Right ventricle myocardium superior (tissue), 1 donor: ENCODE measurements at regions of chr3 and their contacts with region 1.

Region 1: DNA sequence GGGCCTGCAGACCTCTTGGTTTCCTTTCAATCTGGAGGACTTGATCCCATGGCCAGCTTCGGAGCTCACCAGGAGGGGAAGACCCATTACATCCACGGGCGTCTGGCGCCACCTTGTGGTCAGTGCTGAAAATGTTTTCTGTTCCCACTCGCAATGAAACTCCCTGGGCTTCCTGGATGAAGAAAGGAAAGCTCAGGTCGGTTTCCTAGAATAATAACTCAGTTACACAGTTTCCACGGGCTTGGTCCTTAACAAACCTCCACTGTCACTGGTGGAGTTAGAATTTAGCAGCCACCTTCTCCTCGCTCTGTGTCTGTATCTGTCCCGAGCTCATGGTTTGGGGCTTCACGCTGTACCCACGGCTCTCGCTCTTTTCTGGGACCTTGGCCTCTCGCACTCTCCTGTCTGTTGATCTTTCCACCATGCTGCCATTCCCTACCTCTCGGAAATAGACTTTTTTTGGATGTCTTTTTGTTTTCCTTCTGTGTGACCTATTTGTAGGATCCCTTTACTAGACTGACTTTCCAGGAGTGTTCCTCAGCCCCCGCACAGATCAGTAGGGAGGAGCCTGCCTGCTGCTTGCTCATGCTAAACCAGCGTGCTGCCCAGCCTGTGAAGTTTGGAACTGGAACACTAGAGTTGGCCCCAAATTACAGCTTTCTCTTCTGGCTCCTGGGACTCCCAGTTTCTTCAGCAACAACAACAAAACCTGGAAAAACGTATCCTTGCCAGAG is 56.3 kb downstream of the IL20RB start:
- DNase-seq: peak; percentile 92
- ATAC-seq: peak; percentile 99

Region 2: GRCh38 chr3:136075218-136075808 is 938.8 kb before region 1 on chr3:
- intact Hi-C with region 1: loop called (anchors 5 kb)
- DNase-seq: peak; percentile 66
- ATAC-seq: peak; percentile 90

Region 3: GRCh38 chr3:136385457-136385856 is 628.7 kb before region 1 on chr3:
- intact Hi-C with region 1: loop called (anchors 10 kb)
- DNase-seq: no peak
- ATAC-seq: no peak

Region 4: GRCh38 chr3:136818769-136819391 is 195.2 kb before region 1 on chr3 and contains the start of gene SLC35G2:
- intact Hi-C with region 1: loop called (anchors 5 kb)
- DNase-seq: peak; percentile 63
- ATAC-seq: peak; percentile 81
- total RNA-seq, gene SLC35G2: 1.8 TPM